K562 (cell line): ENCODE measurements at regions of chr6 and their contacts with region 1.

Region 1: GRCh38 chr6:89432875-89433251 is at the start of gene ANKRD6:
- DNase-seq: peak; percentile 72 to 92 (median 89)
- ATAC-seq: peak; percentile 99
- H3K4me3 ChIP-seq: peak within 1 kb of the TSS; percentile 45
- H3K27ac ChIP-seq: no peak within 1 kb of the TSS
- H3K4me1 ChIP-seq: peaks cover 5 to 13% of the 10 kb centered on the region in 2 experiments; a peak in 3 of 5 replicates
- H3K27me3 ChIP-seq: peaks cover 23 to 30% of the 10 kb centered on the region in 2 experiments
- CTCF ChIP-seq: peak; percentile 75 to 90 (median 81)
- EP300 ChIP-seq: no peak
- POLR2A ChIP-seq: no peak
- RAD21 ChIP-seq: peak; percentile 92
- polyA plus RNA-seq, gene ANKRD6: 0.04 TPM

Region 2: DNA sequence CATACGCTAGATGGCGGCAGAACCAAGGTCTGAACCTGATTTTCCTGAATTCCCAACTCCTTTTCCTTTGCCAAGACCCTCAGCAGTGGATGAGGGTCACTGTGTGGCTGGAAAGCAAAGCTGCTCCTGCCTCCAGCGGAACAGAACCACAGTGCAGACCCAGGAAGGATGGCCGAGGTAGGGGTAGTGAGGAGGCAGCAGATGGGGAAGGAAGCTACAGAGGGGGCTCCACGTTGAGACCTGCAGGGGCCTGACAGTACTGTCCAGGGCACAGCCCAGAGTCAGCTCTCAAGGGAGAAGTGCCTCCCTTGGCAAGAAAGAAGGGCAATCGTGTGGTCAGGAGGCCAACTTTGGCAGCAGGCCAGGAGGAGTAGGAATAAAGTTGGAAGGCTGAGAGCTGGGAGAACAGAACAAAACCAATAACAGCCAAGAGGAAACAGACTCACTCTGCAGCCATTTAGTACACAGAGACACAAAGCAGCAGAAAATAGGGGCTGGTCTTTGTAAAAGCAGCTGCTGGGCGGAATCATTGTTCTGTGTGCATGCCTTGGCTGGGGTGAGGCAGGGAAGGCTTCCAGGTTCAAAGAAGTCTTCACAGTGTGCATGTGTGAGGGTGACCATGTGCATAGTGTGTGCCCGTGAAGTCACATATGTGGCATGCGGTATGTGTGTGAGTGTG is 120.9 kb before region 1 on chr6:
- CTCF ChIA-PET with region 1: no interaction called
- POLR2A ChIA-PET with region 1: no interaction called
- in situ Hi-C with region 1: no loop called
- intact Hi-C with region 1: loop called (anchors 5 kb)
- DNase-seq: peak in 1 of 4 experiments; percentile 23
- ATAC-seq: peak; percentile 71
- H3K4me3 ChIP-seq: no peak overlapping the region
- H3K27ac ChIP-seq: no peak overlapping the region
- H3K4me1 ChIP-seq: peaks cover 0 to 2% of the 10 kb centered on the region in 2 experiments; a peak in 1 of 5 replicates
- H3K27me3 ChIP-seq: peaks cover 0 to 11% of the 10 kb centered on the region in 2 experiments; a peak in 1 of 5 replicates
- CTCF ChIP-seq: peak; percentile 46 to 79 (median 61)
- EP300 ChIP-seq: no peak
- POLR2A ChIP-seq: no peak
- RAD21 ChIP-seq: peak; percentile 47 to 69

Region 3: GRCh38 chr6:89412071-89413005 is 20.5 kb before region 1 on chr6 and contains the start of gene RRAGD:
- CTCF ChIA-PET with region 1: no interaction called
- POLR2A ChIA-PET with region 1: no interaction called
- in situ Hi-C with region 1: no loop called
- intact Hi-C with region 1: no loop called
- DNase-seq: peak in 3 of 4 experiments; percentile 9 to 40 (median 39)
- ATAC-seq: peak; percentile 56
- H3K4me3 ChIP-seq: peak within 1 kb of the TSS; percentile 27
- H3K27ac ChIP-seq: no peak within 1 kb of the TSS
- H3K4me1 ChIP-seq: peaks cover 0 to 17% of the 10 kb centered on the region in 2 experiments; a peak in 2 of 5 replicates
- H3K27me3 ChIP-seq: peaks cover 30 to 42% of the 10 kb centered on the region in 2 experiments
- CTCF ChIP-seq: no peak
- EP300 ChIP-seq: no peak
- POLR2A ChIP-seq: no peak
- RAD21 ChIP-seq: no peak
- polyA plus RNA-seq, gene RRAGD: not detected

Region 4: DNA sequence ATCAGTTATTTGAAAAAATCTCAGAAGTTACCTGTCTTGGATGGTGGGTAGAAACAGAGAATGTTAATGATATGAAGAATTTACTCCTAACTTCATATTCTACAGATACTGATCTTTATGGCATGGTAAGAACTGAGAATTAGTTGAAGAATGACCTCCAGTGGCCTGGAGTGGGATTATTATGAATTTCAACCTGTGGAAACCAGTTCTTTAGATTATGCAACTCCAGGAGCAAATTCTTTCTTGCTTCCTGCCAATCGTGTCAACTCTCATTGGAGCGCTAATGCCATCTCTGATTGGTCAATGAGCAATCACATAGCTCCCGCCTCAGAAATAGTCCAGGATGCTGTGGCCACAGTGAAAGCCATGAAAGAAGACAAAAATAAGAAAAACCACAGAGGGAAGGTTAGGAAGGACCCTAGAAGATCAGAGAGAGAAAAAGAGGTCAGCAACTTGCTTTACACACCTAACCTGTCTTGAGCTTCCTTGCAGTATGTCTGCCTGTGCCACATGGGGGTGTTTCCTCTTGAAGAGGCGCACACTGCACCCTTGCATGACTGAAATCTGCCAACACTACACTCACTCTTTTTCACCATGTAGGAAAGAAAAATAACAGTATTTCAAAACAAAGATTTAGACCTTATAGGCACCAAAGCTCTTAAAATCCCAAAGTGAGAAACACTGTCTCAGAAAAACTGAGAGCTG is 165.3 kb after region 1 on chr6:
- CTCF ChIA-PET with region 1: interaction called, 7 read pairs
- POLR2A ChIA-PET with region 1: no interaction called
- in situ Hi-C with region 1: no loop called
- intact Hi-C with region 1: loop called (anchors 5 kb)
- DNase-seq: peak in 2 of 4 experiments; percentile 5 to 22
- ATAC-seq: peak; percentile 36; the same call in 2 of the 3 replicates
- H3K4me3 ChIP-seq: no peak overlapping the region
- H3K27ac ChIP-seq: no peak overlapping the region
- H3K4me1 ChIP-seq: no peaks in the 10 kb centered on the region
- H3K27me3 ChIP-seq: peaks cover 13 to 32% of the 10 kb centered on the region in 2 experiments
- CTCF ChIP-seq: peak in 1 of 3 experiments; percentile 43; a peak in 2 of 6 replicates
- EP300 ChIP-seq: no peak
- POLR2A ChIP-seq: no peak
- RAD21 ChIP-seq: peak; percentile 80 to 83

Region 5: GRCh38 chr6:89610149-89610642 is 177.3 kb after region 1 on chr6:
- CTCF ChIA-PET with region 1: interaction called, 12 read pairs
- POLR2A ChIA-PET with region 1: interaction called, 3 read pairs
- in situ Hi-C with region 1: loop called (anchors 5 kb)
- intact Hi-C with region 1: loop called (anchors 1 kb)
- DNase-seq: peak; percentile 72 to 76 (median 74)
- ATAC-seq: peak; percentile 94
- H3K4me3 ChIP-seq: no peak overlapping the region
- H3K27ac ChIP-seq: no peak overlapping the region
- H3K4me1 ChIP-seq: no peaks in the 10 kb centered on the region
- H3K27me3 ChIP-seq: peaks cover 4 to 20% of the 10 kb centered on the region in 2 experiments; a peak in 4 of 5 replicates
- CTCF ChIP-seq: peak; percentile 69 to 91 (median 87)
- EP300 ChIP-seq: no peak
- POLR2A ChIP-seq: no peak
- RAD21 ChIP-seq: peak; percentile 71 to 80